ENCODE measurements at regions of chr22 and their contacts with region 1.

Region 1: DNA sequence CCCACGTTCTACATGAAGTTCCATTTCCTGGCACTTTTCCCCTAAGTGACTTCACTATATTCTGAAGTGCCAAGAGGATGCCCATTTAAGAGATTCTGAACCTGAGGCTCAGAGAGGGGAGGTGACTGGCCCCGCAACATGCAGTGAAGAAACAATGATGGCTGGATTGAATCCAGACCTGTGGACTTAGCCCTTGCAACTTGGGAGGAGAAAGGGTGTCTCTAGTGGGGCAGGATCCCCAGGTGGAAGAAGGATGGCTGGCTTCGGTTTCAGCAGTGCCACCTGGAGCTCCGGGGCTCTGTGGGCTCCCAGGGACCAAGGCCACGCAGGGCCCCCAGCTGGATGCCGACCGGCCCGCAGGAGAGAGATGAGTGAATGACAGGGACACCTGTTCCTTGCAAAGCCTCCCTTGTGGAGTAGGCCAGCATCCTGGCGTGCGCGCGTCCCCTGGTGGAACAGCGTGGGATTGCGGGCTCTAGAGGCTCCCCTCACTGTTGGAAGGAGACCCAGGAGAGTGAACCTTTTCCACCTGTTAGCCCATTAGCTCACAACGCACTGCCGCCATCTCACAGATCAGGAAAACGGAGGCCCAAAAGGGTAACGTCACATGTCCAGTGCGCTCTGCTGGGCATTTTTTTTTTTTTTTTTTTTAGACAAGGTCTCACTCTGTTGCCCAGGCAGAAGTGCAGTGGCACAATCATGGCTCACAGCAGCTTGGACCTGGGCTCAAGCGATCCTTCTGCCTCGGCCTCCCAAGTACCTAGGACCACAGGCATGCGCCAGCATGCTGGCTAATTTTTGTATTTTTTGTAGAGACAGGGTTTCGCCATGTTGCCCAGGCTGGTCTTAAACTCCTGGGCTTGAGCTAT is 104.7 kb downstream of the KIAA1671 start:
- DNase-seq: peak; percentile 50 to 85 (median 77)
- ATAC-seq: peak; percentile 57
- H3K4me3 ChIP-seq: no peak overlapping the region
- H3K4me3 Mint-ChIP-seq: no peak overlapping the region
- H3K27ac ChIP-seq: no peak overlapping the region
- H3K27ac Mint-ChIP-seq: no peak overlapping the region
- H3K4me1 ChIP-seq: peaks cover 29% of the 10 kb centered on the region
- H3K4me1 Mint-ChIP-seq: peaks cover 36% of the 10 kb centered on the region
- H3K27me3 ChIP-seq: peaks cover 0 to 2% of the 10 kb centered on the region in 2 experiments
- H3K27me3 Mint-ChIP-seq: no peaks in the 10 kb centered on the region
- CTCF ChIP-seq: peak; percentile 76

Region 2: GRCh38 chr22:24938741-24939341 is 118.4 kb before region 1 on chr22:
- CTCF ChIA-PET with region 1: interaction called, 28 read pairs
- POLR2A ChIA-PET with region 1: no interaction called
- intact Hi-C with region 1: loop called in 1 of 2 experiments (anchors 1 kb)
- DNase-seq: peak in 5 of 9 experiments; percentile 7 to 68 (median 23)
- ATAC-seq: peak; percentile 56
- H3K4me3 ChIP-seq: no peak overlapping the region
- H3K4me3 Mint-ChIP-seq: no peak overlapping the region
- H3K27ac ChIP-seq: no peak overlapping the region
- H3K27ac Mint-ChIP-seq: no peak overlapping the region
- H3K4me1 ChIP-seq: no peaks in the 10 kb centered on the region
- H3K4me1 Mint-ChIP-seq: no peaks in the 10 kb centered on the region
- H3K27me3 ChIP-seq: no peaks in the 10 kb centered on the region
- H3K27me3 Mint-ChIP-seq: peaks cover 2% of the 10 kb centered on the region
- CTCF ChIP-seq: peak; percentile 82

Region 3: GRCh38 chr22:24951942-24952836 is 105.1 kb before region 1 on chr22 and contains the start of gene KIAA1671:
- CTCF ChIA-PET with region 1: interaction called, 7 read pairs
- POLR2A ChIA-PET with region 1: no interaction called
- intact Hi-C with region 1: loop called in 1 of 2 experiments (anchors 1 kb)
- DNase-seq: peak; percentile 65 to 91 (median 84)
- ATAC-seq: peak; percentile 93
- H3K4me3 ChIP-seq: peak within 1 kb of the TSS; percentile 70 to 71
- H3K4me3 Mint-ChIP-seq: peak within 1 kb of the TSS; percentile 83
- H3K27ac ChIP-seq: no peak within 1 kb of the TSS
- H3K27ac Mint-ChIP-seq: no peak within 1 kb of the TSS
- H3K4me1 ChIP-seq: peaks cover 13% of the 10 kb centered on the region
- H3K4me1 Mint-ChIP-seq: peaks cover 21% of the 10 kb centered on the region
- H3K27me3 ChIP-seq: peaks cover 9% of the 10 kb centered on the region in 2 experiments
- H3K27me3 Mint-ChIP-seq: peaks cover 54% of the 10 kb centered on the region
- CTCF ChIP-seq: peak; percentile 86
- total RNA-seq, gene KIAA1671: 2.3 to 2.4 TPM

Region 4: GRCh38 chr22:25081409-25081824 is 24.2 kb after region 1 on chr22:
- CTCF ChIA-PET with region 1: interaction called, 151 read pairs
- POLR2A ChIA-PET with region 1: interaction called, 7 read pairs
- intact Hi-C with region 1: loop called (anchors 1 kb)
- DNase-seq: peak in 8 of 9 experiments; percentile 17 to 75 (median 56)
- ATAC-seq: peak; percentile 75
- H3K4me3 ChIP-seq: no peak overlapping the region
- H3K4me3 Mint-ChIP-seq: no peak overlapping the region
- H3K27ac ChIP-seq: no peak overlapping the region
- H3K27ac Mint-ChIP-seq: no peak overlapping the region
- H3K4me1 ChIP-seq: peaks cover 32% of the 10 kb centered on the region
- H3K4me1 Mint-ChIP-seq: peaks cover 58% of the 10 kb centered on the region
- H3K27me3 ChIP-seq: no peaks in the 10 kb centered on the region
- H3K27me3 Mint-ChIP-seq: no peaks in the 10 kb centered on the region
- CTCF ChIP-seq: peak; percentile 67

Region 5: DNA sequence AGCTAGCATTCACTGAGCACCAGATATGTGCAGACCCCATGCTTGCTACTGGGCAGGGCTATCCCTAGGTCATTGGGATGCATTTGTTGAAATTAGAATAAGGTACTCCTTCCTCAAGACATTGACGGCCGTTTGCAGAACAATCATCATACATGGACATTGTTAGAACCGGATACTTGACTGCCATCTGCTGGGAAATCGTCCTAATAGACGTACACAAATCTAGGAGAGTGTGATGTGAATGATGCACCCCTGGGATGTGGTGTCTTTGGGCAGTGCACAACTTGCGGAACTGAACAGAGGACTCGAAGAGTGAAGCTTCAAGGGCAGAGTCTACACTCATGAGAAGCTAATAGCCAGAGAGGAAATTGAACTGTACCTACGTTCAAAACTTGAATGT is 720.6 kb after region 1 on chr22:
- CTCF ChIA-PET with region 1: no interaction called
- POLR2A ChIA-PET with region 1: no interaction called
- intact Hi-C with region 1: no loop called
- DNase-seq: no peak
- ATAC-seq: no peak
- H3K4me3 ChIP-seq: no peak overlapping the region
- H3K4me3 Mint-ChIP-seq: no peak overlapping the region
- H3K27ac ChIP-seq: no peak overlapping the region
- H3K27ac Mint-ChIP-seq: no peak overlapping the region
- H3K4me1 ChIP-seq: no peaks in the 10 kb centered on the region
- H3K4me1 Mint-ChIP-seq: peaks cover 2% of the 10 kb centered on the region
- H3K27me3 ChIP-seq: no peaks in the 10 kb centered on the region
- H3K27me3 Mint-ChIP-seq: peaks cover 5% of the 10 kb centered on the region
- CTCF ChIP-seq: no peak

Measured in CD8-positive, alpha-beta T cell (primary cell).